Right cardiac atrium (tissue), 5 donors: ENCODE measurements at regions of chr18 and their contacts with region 1.

Region 1: DNA sequence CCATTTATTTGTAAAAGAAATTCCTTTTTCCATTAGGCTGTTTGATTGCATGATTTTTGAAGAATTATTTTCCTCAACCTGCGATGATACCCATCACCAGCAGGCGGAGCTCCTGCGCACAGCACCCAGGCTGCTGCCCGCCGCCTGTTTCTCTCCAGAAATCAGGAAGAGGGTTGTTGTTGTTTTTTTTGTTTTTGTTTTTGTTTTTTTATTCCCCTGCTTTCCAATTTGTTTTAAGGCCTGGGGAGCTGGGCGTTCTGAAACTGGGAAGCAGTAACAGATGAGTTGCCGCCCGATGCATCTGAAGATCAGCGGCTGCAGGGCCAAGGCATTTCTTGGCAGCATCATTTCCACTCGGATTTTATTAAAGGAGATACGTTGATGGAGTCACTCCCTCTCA is 132.1 kb downstream of the MBP start:
- DNase-seq: peak; percentile 63 to 83 (median 81)
- ATAC-seq: no peak
- H3K4me3 ChIP-seq: peak overlapping the region; percentile 48
- H3K27ac ChIP-seq: no peak overlapping the region
- H3K4me1 ChIP-seq: no peaks in the 10 kb centered on the region
- H3K27me3 ChIP-seq: no peaks in the 10 kb centered on the region

Region 2: DNA sequence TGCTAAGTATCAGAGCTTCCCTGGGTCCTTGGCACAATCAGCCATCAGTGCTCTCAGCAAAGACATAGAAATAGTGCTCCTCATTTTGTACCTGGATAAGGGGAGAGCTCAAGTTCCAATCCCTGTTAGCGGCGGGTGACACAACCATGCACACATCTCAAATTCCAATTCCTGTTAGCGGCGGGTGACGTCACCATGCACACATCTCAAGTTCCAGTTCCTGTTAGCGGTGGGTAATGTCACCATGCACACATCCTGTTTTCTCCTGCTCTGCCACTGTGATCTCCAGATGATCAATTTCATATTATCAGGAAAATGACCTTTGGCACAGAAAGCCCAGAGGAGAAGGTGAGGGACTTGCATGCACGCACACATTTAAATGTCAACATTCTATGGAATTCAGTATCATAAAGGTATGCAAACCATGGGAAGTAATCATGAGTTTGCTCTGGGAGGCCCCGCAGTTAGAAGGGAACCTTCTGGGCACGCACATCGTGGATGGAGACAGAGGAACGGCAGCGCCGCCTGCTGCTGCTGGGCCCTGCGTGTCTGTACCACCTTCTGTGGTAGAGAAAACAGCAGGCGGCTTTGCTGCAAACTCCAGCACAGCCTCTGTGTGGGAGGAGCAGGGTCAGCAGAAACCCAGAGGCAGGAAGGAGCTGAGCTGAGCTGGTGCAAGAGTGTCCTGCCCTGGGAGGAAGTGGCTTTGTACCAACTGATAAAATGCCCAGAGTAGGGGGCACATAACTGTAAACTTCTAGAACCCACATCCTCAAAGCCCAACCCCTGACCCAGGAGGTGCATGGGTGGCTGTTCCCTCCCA is 54.3 kb after region 1 on chr18:
- intact Hi-C with region 1: loop called in 3 of 4 experiments (anchors 5 to 10 kb)
- DNase-seq: peak; percentile 85 to 95 (median 93)
- ATAC-seq: peak; percentile 85 to 87
- H3K4me3 ChIP-seq: no peak overlapping the region
- H3K27ac ChIP-seq: peak overlapping the region; percentile 29
- H3K4me1 ChIP-seq: peaks cover 2% of the 10 kb centered on the region
- H3K27me3 ChIP-seq: no peaks in the 10 kb centered on the region

Region 3: DNA sequence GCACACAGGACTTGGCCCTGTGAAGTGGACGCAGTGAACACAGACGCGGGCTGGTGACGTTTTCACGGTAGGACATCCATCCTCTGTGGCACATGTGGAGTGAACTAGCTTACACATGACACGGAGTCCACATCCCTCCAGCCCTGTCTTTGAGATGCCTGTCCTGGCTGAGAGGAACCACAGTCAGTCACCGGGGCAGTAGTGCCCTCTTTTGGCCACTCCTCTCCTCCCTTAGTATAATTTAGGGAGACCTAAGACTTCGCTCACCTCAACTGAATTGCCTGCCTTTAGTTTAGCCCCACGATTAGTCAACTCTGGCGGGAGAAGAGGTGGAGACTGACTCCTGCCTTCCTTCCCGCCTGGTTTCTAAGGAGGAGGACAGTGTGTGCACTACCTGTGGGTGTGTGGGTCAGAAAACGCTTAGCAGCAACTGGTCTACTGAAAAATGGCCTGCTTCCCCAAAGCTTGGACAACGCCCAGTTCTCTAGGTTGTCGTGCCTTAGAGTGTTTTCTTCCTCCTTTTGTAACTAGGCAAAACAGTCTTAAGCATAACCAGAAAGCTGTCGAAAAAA is 61.5 kb after region 1 on chr18:
- intact Hi-C with region 1: loop called in 3 of 4 experiments (anchors 5 to 10 kb)
- DNase-seq: peak in 1 of 3 donors; percentile 52
- ATAC-seq: peak in 1 of 2 donors; percentile 34
- H3K4me3 ChIP-seq: no peak overlapping the region
- H3K27ac ChIP-seq: no peak overlapping the region
- H3K4me1 ChIP-seq: peaks cover 6% of the 10 kb centered on the region
- H3K27me3 ChIP-seq: no peaks in the 10 kb centered on the region

Region 4: DNA sequence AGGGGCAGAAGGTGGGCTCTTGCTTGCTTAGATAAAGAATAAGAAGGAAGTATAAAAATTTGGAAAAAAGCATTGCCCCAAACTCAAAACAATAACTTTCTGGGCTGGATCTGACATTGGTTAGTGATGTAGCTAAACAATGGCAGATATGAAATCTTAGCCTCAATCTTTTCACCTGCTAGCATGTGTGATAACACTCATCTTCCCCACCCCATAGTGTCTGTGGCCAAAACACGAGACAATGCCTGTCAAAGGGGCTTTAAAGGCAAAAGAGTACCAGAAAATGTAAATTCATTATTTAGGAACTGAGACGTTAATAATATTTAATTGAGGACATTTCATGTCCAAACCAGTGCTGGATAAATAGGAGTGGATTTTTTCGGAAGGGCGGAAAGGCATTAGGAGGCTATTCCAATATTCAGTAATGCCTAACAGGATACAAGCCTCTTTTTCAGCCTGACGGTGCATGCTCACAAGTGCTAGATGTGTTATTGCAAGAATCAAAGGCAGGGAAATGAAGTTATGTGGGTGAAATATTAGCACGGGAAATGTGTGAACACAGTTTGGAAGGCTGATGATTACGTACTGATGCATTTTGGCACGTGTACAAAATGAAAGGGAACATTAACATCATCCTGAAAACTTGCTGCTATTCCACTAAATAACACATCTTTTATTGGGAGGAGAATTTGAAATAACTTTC is 644.8 kb after region 1 on chr18:
- intact Hi-C with region 1: loop called in 1 of 4 experiments (anchors 10 kb)
- DNase-seq: no peak
- ATAC-seq: no peak
- H3K4me3 ChIP-seq: no peak overlapping the region
- H3K27ac ChIP-seq: no peak overlapping the region
- H3K4me1 ChIP-seq: no peaks in the 10 kb centered on the region
- H3K27me3 ChIP-seq: no peaks in the 10 kb centered on the region